ENCODE measurements at regions of chr18 and their contacts with region 1.

Region 1: DNA sequence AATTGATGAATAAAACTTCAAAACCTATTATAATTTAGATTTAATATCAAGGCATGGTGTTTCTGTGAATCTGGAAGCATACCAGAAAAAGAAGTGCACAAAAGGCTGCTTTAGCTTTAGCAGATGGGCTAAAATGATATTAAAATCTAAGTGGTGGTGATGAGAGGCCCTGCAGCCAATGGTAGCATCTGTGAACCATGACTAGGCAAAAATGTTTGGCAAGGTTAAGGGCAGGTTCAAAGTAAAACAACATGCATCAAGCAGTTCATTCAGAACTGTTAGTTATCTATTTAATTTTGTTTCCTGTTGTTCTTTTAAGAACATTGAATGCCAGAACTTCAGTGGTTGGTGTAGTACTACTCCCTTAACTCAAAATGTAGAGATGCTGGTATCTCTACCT is 1736.9 kb upstream of the CELF4 start:
- DNase-seq: no peak
- ATAC-seq: no peak
- H3K4me3 ChIP-seq: no peak overlapping the region
- H3K4me3 Mint-ChIP-seq: no peak overlapping the region
- H3K27ac ChIP-seq: no peak overlapping the region
- H3K27ac Mint-ChIP-seq: no peak overlapping the region
- H3K4me1 ChIP-seq: no peaks in the 10 kb centered on the region
- H3K4me1 Mint-ChIP-seq: no peaks in the 10 kb centered on the region
- H3K27me3 ChIP-seq: no peaks in the 10 kb centered on the region
- H3K27me3 Mint-ChIP-seq: no peaks in the 10 kb centered on the region
- CTCF ChIP-seq: no peak

Region 2: GRCh38 chr18:39259736-39260135 is 42.7 kb before region 1 on chr18:
- CTCF ChIA-PET with region 1: no interaction called
- POLR2A ChIA-PET with region 1: no interaction called
- intact Hi-C with region 1: loop called in 1 of 2 experiments (anchors 5 kb)
- DNase-seq: no peak
- ATAC-seq: no peak
- H3K4me3 ChIP-seq: no peak overlapping the region
- H3K4me3 Mint-ChIP-seq: no peak overlapping the region
- H3K27ac ChIP-seq: no peak overlapping the region
- H3K27ac Mint-ChIP-seq: no peak overlapping the region
- H3K4me1 ChIP-seq: no peaks in the 10 kb centered on the region
- H3K4me1 Mint-ChIP-seq: no peaks in the 10 kb centered on the region
- H3K27me3 ChIP-seq: no peaks in the 10 kb centered on the region
- H3K27me3 Mint-ChIP-seq: no peaks in the 10 kb centered on the region
- CTCF ChIP-seq: no peak

Region 3: GRCh38 chr18:39938676-39939608 is 636.5 kb after region 1 on chr18:
- CTCF ChIA-PET with region 1: no interaction called
- POLR2A ChIA-PET with region 1: no interaction called
- intact Hi-C with region 1: no loop called
- DNase-seq: no peak
- ATAC-seq: no peak
- H3K4me3 ChIP-seq: no peak overlapping the region
- H3K4me3 Mint-ChIP-seq: no peak overlapping the region
- H3K27ac ChIP-seq: no peak overlapping the region
- H3K27ac Mint-ChIP-seq: no peak overlapping the region
- H3K4me1 ChIP-seq: no peaks in the 10 kb centered on the region
- H3K4me1 Mint-ChIP-seq: no peaks in the 10 kb centered on the region
- H3K27me3 ChIP-seq: no peaks in the 10 kb centered on the region
- H3K27me3 Mint-ChIP-seq: no peaks in the 10 kb centered on the region
- CTCF ChIP-seq: no peak